Mammary epithelial cell (primary cell): ENCODE measurements at regions of chr11 and their contacts with region 1.

Region 1: DNA sequence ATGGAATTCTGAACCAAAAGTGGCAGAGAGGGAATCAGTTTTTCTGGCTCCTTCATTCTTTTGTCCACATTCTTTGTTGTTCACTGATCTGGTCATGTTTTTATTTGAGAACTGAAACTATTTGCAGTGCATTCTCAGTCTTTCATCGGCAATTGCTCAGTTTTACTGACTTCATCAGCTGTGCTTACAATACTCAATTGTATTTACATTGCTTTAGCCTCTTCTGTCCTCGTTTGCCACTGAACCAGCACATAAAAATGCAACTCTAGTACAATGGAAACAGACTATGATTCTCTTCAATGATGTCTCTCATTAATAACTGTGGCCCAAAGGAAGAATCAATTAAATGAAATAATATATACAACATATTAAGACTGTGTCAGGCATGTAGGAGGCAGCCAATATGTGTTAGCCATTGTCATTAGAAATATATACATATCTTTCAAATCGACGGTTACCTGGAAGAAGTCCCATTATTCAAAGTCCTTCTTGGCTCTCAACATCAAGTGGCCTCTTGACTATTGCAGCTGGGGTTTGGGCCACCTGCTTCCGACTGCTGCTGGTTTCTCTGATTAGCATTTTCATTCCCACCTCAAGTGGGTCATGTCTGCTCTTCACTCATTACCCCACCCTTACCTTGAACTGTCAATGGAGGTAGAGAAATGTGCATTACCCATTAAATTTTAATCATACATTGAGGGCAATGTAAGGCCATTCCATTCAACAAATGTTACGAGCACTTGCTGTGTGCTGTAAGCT is 600.1 kb downstream of the INSC start:
- DNase-seq: no peak
- H3K4me3 ChIP-seq: no peak overlapping the region
- H3K27ac ChIP-seq: no peak overlapping the region
- H3K4me1 ChIP-seq: no peaks in the 10 kb centered on the region
- H3K27me3 ChIP-seq: no peaks in the 10 kb centered on the region
- CTCF ChIP-seq: no peak

Region 2: GRCh38 chr11:15418921-15419320 is 295.9 kb before region 1 on chr11:
- CTCF ChIA-PET with region 1: no interaction called
- dilution Hi-C with region 1: no loop called
- in situ Hi-C with region 1: no loop called
- intact Hi-C with region 1: no loop called
- DNase-seq: no peak
- H3K4me3 ChIP-seq: no peak overlapping the region
- H3K27ac ChIP-seq: no peak overlapping the region
- H3K4me1 ChIP-seq: no peaks in the 10 kb centered on the region
- H3K27me3 ChIP-seq: no peaks in the 10 kb centered on the region
- CTCF ChIP-seq: no peak

Region 3: GRCh38 chr11:15745266-15745665 is 30.4 kb after region 1 on chr11:
- CTCF ChIA-PET with region 1: no interaction called
- dilution Hi-C with region 1: no loop called
- in situ Hi-C with region 1: no loop called
- intact Hi-C with region 1: loop called (anchors 5 kb)
- DNase-seq: peak; percentile 54
- H3K4me3 ChIP-seq: no peak overlapping the region
- H3K27ac ChIP-seq: no peak overlapping the region
- H3K4me1 ChIP-seq: no peaks in the 10 kb centered on the region
- H3K27me3 ChIP-seq: no peaks in the 10 kb centered on the region
- CTCF ChIP-seq: no peak